ENCODE measurements at regions of chr13 and their contacts with region 1.

Region 1: GRCh38 chr13:67075239-67075638 is 154.9 kb downstream of the PCDH9 start:
- DNase-seq: no peak
- ATAC-seq: peak; percentile 32 to 79 (median 64)
- H3K4me3 ChIP-seq: peak overlapping the region in 8 of 12 donors; percentile 15 to 53 (median 34)
- H3K27ac ChIP-seq: no peak overlapping the region
- H3K4me1 ChIP-seq: peaks cover 0 to 6% (median 0%) of the 10 kb centered on the region in 12 donors
- H3K27me3 ChIP-seq: no peaks in the 10 kb centered on the region
- CTCF ChIP-seq: peak in 9 of 12 donors; percentile 14 to 59 (median 43)
- POLR2A ChIP-seq: no peak

Region 2: GRCh38 chr13:66689628-66690027 is 385.6 kb before region 1 on chr13:
- intact Hi-C with region 1: loop called in 1 of 10 experiments (anchors 10 kb)
- DNase-seq: no peak
- ATAC-seq: peak in 1 of 4 donors; percentile 59
- H3K4me3 ChIP-seq: no peak overlapping the region
- H3K27ac ChIP-seq: no peak overlapping the region
- H3K4me1 ChIP-seq: peaks cover 0 to 7% (median 0%) of the 10 kb centered on the region in 12 donors
- H3K27me3 ChIP-seq: no peaks in the 10 kb centered on the region
- CTCF ChIP-seq: peak in 6 of 12 donors; percentile 33 to 55 (median 38)
- POLR2A ChIP-seq: no peak

Region 3: DNA sequence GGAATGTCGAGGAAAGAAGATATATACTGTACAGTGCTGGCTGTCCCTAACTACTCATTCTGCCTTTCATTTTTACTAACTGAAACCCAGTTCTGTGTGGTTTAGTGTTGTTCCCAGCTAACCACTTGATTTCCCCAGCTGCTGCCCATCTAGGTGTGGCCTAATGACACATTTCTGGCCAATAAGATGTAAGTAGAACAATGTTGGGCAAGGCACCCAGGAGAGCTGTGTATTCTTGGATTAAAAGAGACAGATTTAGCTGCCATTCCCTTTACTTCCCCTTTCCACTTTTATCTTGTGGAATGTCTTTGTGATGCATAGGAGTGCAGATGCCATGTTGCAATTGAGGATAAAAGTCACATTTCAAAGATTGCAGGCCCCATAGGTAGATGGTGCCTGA is 183.2 kb after region 1 on chr13:
- intact Hi-C with region 1: no loop called
- DNase-seq: no peak
- ATAC-seq: no peak
- H3K4me3 ChIP-seq: no peak overlapping the region
- H3K27ac ChIP-seq: no peak overlapping the region
- H3K4me1 ChIP-seq: no peaks in the 10 kb centered on the region
- H3K27me3 ChIP-seq: peaks cover 0 to 3% (median 0%) of the 10 kb centered on the region in 9 donors
- CTCF ChIP-seq: no peak
- POLR2A ChIP-seq: no peak

Measured in heart left ventricle (tissue), 16 donors.